Mammary epithelial cell (primary cell): ENCODE measurements at regions of chr6 and their contacts with region 1.

Region 1: DNA sequence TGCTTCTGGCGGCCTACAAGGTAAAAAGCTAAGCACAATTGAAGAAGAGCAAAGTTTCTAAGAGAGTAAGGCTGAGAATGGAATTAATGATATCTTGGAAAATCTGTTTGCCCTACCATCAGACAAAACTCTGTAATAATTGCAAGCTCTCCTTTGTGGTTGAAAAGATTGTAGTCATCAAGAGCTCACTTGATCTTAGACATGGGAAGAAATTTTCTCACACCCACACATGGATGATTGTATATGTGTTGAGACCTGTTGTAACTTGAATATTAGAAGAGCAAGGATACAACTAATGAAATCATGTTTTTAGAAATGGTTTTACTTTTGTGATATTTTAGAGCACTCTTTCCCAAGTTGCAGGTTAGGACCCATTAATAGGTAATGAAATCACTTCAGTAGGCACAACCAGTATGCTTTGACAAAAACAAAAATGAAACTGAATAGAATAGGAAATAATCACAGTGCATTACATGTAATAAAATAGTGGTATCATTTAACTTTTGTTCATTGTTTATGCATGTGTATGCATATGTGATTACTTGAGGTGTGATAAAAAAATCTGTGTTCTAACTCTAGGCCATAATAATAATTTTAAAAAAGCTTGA is 14.0 kb downstream of the DCBLD1 start:
- DNase-seq: peak; percentile 96
- H3K4me3 ChIP-seq: peak overlapping the region in 2 of 3 experiments; percentile 9 to 28
- H3K27ac ChIP-seq: peak overlapping the region; percentile 95
- H3K4me1 ChIP-seq: peaks cover 57% of the 10 kb centered on the region
- H3K27me3 ChIP-seq: no peaks in the 10 kb centered on the region
- CTCF ChIP-seq: no peak

Region 2: DNA sequence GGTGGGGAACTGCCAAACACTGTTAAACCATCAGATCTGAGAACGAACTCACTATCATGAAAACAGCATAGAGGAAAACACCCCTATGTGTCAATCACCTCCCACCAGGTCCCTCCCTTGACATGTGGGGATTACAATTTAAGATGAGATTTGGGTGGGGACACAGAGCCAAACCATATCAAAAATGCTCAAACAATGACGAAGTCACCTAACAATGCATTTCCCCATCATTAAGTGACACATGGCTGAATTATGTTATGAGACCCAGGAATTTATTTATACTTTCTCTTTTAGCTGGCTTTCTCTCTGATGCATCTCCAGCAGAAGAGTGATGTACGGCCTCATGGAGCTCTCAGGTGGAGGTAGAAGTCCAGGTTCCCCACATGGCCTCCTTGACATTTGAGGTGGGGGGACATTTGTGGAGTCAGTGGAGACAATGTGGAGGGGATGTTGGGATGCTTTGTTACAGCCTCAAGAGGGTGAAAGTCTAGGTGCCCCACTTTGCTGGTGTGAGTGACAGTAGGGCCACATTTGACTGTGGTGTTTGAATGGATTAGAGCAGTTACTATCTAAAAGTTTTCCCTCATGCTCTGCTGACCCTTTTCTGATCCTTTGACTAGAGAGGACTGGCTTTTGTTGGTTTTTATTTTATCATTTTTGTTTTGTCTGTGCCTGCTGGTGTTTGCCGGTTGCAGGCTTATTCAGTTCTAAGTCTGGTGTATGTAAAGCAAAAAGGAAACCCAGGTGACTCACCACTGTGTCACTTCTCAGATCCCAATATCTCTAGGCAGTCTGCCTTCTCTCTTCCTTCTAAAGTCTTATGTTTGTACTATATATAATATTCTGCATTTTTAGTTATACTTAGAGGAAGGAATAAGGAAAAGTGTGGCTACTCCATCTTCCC is 32.5 kb before region 1 on chr6:
- CTCF ChIA-PET with region 1: no interaction called
- dilution Hi-C with region 1: no loop called
- in situ Hi-C with region 1: no loop called
- intact Hi-C with region 1: no loop called
- DNase-seq: peak; percentile 75
- H3K4me3 ChIP-seq: peak overlapping the region in 1 of 3 experiments; percentile 4
- H3K27ac ChIP-seq: peak overlapping the region; percentile 33
- H3K4me1 ChIP-seq: peaks cover 16% of the 10 kb centered on the region
- H3K27me3 ChIP-seq: no peaks in the 10 kb centered on the region
- CTCF ChIP-seq: no peak

Region 3: DNA sequence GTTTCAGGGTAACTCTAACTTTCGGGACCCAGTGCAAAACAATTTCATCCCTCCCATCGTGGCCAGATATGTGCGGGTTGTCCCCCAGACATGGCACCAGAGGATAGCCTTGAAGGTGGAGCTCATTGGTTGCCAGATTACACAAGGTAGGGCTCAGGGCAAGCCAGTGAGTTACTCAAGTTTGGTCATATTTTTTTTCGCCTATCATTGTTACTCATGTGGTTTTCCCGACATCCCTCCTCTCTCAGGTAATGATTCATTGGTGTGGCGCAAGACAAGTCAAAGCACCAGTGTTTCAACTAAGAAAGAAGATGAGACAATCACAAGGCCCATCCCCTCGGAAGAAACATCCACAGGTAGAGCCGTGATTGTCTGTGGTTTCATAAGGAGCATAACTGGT is 44.2 kb after region 1 on chr6:
- CTCF ChIA-PET with region 1: no interaction called
- dilution Hi-C with region 1: no loop called
- in situ Hi-C with region 1: no loop called
- intact Hi-C with region 1: loop called (anchors 1 kb)
- DNase-seq: peak; percentile 96
- H3K4me3 ChIP-seq: no peak overlapping the region
- H3K27ac ChIP-seq: peak overlapping the region; percentile 70
- H3K4me1 ChIP-seq: peaks cover 47% of the 10 kb centered on the region
- H3K27me3 ChIP-seq: no peaks in the 10 kb centered on the region
- CTCF ChIP-seq: no peak